CD4-positive, alpha-beta memory T cell (primary cell): ENCODE measurements at regions of chr1 and their contacts with region 1.

Region 1: GRCh38 chr1:154878371-154879022 is 8.4 kb upstream of the KCNN3 start:
- DNase-seq: peak; percentile 58 to 68 (median 62)
- H3K4me3 ChIP-seq: no peak overlapping the region
- H3K4me3 Mint-ChIP-seq: no peak overlapping the region
- H3K27ac ChIP-seq: no peak overlapping the region
- H3K27ac Mint-ChIP-seq: no peak overlapping the region
- H3K4me1 ChIP-seq: no peaks in the 10 kb centered on the region
- H3K4me1 Mint-ChIP-seq: peaks cover 0 to 1% (median 0%) of the 10 kb centered on the region in 4 donors
- H3K27me3 ChIP-seq: no peaks in the 10 kb centered on the region
- H3K27me3 Mint-ChIP-seq: peaks cover 3 to 5% of the 10 kb centered on the region in 2 donors

Region 2: DNA sequence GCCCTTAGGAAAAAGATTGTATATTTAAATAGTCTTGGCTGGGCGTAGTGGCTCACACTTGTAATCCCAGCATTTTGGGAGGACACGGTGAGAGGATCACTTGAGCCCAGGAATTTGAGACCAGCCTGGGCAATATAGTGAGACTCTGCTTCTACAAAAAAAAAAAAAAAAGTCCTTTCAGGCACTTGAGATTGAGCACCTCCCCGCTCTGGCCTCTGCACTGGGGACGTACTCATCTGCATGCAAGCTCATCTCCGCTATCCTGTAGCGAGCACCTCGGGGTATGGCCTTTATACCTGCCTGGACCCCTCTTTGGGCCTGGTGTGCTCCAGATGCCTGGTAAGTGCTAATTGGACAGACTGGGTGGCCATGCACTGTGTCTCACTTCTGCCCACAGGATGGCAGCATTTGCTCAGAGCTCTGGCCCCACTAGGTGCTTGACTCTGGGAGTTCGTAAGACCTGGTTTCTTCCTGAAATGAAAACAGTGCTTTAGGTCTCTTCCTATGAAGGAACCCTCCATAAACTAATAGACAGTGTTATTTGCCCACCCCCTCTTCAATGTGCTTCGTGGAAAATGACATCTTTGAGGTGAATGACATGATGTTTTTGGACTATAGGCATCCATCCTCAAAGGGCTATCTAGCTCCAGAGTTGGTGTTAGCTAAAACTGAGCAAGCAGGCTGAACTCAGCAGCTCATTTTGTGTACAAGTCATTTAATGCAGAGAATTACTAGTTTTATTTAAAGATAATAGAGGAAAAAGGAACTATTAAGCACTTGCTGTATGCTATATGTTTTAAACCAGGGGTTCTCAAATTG is 208.8 kb before region 1 on chr1:
- CTCF ChIA-PET with region 1: interaction called, 22 read pairs
- POLR2A ChIA-PET with region 1: interaction called, 3 read pairs
- intact Hi-C with region 1: loop called (anchors 1 kb)
- DNase-seq: peak; percentile 65 to 73 (median 68)
- H3K4me3 ChIP-seq: no peak overlapping the region
- H3K4me3 Mint-ChIP-seq: no peak overlapping the region
- H3K27ac ChIP-seq: no peak overlapping the region
- H3K27ac Mint-ChIP-seq: no peak overlapping the region
- H3K4me1 ChIP-seq: no peaks in the 10 kb centered on the region
- H3K4me1 Mint-ChIP-seq: no peaks in the 10 kb centered on the region
- H3K27me3 ChIP-seq: no peaks in the 10 kb centered on the region
- H3K27me3 Mint-ChIP-seq: peaks cover 2% of the 10 kb centered on the region in 2 donors

Region 3: DNA sequence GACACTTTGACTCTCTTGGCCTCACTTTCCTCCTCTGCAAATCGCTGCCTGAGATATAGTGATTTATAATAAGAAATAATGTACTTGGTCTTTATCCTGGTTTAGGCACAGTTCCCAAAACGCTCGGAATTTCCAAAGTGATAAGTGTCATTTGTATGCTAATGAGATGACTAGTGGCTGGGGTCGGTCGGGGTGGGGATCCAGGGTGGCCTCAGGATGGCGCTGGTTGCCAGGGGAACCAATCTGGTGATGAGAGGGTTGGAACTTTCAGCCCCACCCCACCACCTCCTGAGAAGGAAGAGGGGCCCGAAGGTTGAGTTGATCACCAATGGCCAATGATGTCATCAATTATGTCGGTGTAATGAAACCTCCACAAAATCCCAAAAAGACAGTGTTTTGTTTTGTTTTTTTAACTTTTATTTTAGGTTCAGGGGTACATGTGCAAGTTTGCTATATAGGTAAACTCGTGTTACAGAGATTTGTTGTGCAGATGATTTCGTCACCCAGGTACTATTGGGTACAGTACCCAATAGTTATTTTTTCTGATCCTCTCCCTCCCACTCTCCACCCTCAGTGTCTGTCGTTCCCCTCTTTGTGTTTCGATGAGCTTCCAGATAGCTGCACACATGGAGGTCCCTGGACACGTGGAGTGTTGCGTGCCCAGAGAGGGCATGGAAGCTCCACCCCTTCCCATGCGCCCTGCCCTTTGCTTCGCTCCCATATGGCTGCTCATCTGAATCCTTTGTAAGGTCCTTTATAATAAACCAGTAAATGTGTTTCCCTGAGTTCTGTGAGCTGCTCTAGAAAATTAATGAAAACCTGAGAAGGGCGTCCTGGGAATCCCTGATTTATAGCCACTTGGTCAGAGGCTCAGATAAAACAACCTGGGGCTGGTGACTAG is 105.6 kb before region 1 on chr1:
- CTCF ChIA-PET with region 1: interaction called, 3 read pairs
- POLR2A ChIA-PET with region 1: no interaction called
- intact Hi-C with region 1: loop called (anchors 1 kb)
- DNase-seq: peak in 1 of 5 donors; percentile 17
- H3K4me3 ChIP-seq: no peak overlapping the region
- H3K4me3 Mint-ChIP-seq: no peak overlapping the region
- H3K27ac ChIP-seq: no peak overlapping the region
- H3K27ac Mint-ChIP-seq: peak overlapping the region in 1 of 7 donors; percentile 14
- H3K4me1 ChIP-seq: no peaks in the 10 kb centered on the region
- H3K4me1 Mint-ChIP-seq: peaks cover 0 to 1% (median 0%) of the 10 kb centered on the region in 4 donors
- H3K27me3 ChIP-seq: no peaks in the 10 kb centered on the region
- H3K27me3 Mint-ChIP-seq: peaks cover 0 to 2% of the 10 kb centered on the region in 2 donors